GM10248 (cell line): ENCODE measurements at regions of chr10 and their contacts with region 1.

Region 1: GRCh38 chr10:26725837-26726727 is 28.6 kb downstream of the PDSS1 start:
- DNase-seq: peak; percentile 59
- CTCF ChIP-seq: peak; percentile 71

Region 2: DNA sequence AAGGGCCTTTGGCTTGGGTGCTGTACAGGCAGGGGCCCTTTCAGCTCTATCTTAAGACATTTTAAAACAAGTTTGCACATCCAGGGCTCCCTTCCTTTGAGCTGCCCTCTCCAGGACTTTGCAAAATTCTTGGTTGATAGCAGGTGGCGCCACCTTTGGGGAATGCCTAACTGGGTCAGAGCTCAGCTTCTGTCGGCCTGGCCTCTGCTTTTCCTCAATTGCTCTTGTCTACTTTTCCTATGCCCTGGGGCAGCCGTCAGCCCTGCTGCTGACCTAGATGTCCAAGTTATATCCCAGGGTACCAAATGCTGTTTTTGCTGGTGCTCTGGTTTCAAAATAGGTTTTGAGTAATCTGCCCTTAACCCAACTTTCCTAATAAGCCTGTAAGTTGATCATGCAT is 222.2 kb before region 1 on chr10:
- CTCF ChIA-PET with region 1: no interaction called
- POLR2A ChIA-PET with region 1: no interaction called
- DNase-seq: no peak
- CTCF ChIP-seq: peak; percentile 26

Region 3: GRCh38 chr10:26706936-26707335 is 19.1 kb before region 1 on chr10:
- CTCF ChIA-PET with region 1: interaction called, 12 read pairs
- POLR2A ChIA-PET with region 1: interaction called, 5 read pairs
- DNase-seq: no peak
- CTCF ChIP-seq: no peak

Region 4: GRCh38 chr10:26739071-26739631 is 13.1 kb after region 1 on chr10:
- CTCF ChIA-PET with region 1: interaction called, 41 read pairs
- POLR2A ChIA-PET with region 1: no interaction called
- DNase-seq: no peak
- CTCF ChIP-seq: no peak

Region 5: GRCh38 chr10:26805567-26806245 is 79.6 kb after region 1 on chr10:
- CTCF ChIA-PET with region 1: interaction called, 10 read pairs
- POLR2A ChIA-PET with region 1: no interaction called
- DNase-seq: no peak
- CTCF ChIP-seq: no peak

Region 6: GRCh38 chr10:26869528-26869927 is 143.4 kb after region 1 on chr10:
- CTCF ChIA-PET with region 1: interaction called, 251 read pairs
- POLR2A ChIA-PET with region 1: no interaction called
- DNase-seq: no peak
- CTCF ChIP-seq: no peak